A549 (cell line): ENCODE measurements at regions of chr6 and their contacts with region 1.

Region 1: GRCh38 chr6:37547564-37548061 is 47.9 kb upstream of the CCDC167 start:
- DNase-seq: no peak
- ATAC-seq: peak in 1 of 2 experiments; percentile 28; a peak in 1 of 6 replicates
- H3K4me3 ChIP-seq: no peak overlapping the region
- H3K27ac ChIP-seq: peak overlapping the region in 1 of 2 experiments; percentile 27; a peak in 1 of 6 replicates
- H3K4me1 ChIP-seq: peaks cover 15% of the 10 kb centered on the region; the same call in 2 of the 3 replicates
- CTCF ChIP-seq: no peak
- EP300 ChIP-seq: no peak
- POLR2A ChIP-seq: no peak
- RAD21 ChIP-seq: no peak

Region 2: DNA sequence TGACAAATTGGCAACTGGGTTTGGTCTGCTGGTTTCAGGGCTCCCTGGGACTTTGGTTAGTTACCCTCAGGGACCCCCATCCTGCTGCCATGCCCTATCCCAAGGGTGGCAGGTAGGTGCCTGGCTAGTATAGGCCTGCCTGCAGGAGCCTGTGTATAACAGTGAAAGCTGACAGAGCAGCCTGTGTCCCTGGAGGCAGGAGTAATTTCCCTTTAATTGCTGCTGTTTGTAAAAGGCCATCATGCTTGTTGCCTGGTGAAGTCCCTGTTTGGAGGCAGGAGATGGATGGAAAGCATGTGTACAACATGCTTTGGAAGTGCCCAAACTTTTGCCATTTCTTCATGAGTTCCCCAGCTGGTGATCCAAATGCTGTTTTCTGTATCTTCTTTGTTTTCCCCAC is 84.5 kb before region 1 on chr6:
- CTCF ChIA-PET with region 1: no interaction called
- POLR2A ChIA-PET with region 1: interaction called, 11 read pairs
- DNase-seq: no peak
- ATAC-seq: peak in 1 of 2 experiments; percentile 47; a peak in 1 of 6 replicates
- H3K4me3 ChIP-seq: no peak overlapping the region
- H3K27ac ChIP-seq: no peak overlapping the region
- H3K4me1 ChIP-seq: no peaks in the 10 kb centered on the region
- CTCF ChIP-seq: no peak
- EP300 ChIP-seq: no peak
- POLR2A ChIP-seq: no peak
- RAD21 ChIP-seq: no peak